ENCODE measurements at regions of chr11 and their contacts with region 1.

Region 1: DNA sequence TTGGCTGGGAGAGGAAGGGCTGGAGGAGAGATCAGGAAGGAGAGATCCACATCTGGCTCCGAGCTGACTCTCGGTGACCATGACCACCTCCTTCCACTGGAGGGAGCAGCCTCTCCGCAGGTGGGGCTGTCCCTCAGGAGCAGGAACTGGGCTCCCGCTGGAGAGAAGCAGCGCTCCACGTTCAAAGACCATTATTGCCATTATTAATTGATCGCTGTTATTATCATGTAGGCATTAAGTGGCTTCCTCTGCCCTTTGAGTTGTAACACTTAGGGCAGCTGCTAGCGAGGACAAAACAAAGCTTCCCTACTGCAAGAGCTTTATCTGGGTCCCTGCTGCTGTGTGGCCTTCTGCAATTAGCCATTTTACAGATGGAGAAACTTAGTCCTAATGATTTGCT is 251.9 kb downstream of the ST3GAL4 start:
- DNase-seq: no peak
- H3K4me3 ChIP-seq: no peak overlapping the region
- H3K27ac ChIP-seq: no peak overlapping the region
- H3K4me1 ChIP-seq: peaks cover 0 to 7% (median 2%) of the 10 kb centered on the region in 6 donors
- H3K27me3 ChIP-seq: peaks cover 0 to 59% (median 0%) of the 10 kb centered on the region in 7 donors
- CTCF ChIP-seq: peak in 9 of 11 experiments; percentile 39 to 60 (median 50)
- POLR2A ChIP-seq: no peak

Region 2: DNA sequence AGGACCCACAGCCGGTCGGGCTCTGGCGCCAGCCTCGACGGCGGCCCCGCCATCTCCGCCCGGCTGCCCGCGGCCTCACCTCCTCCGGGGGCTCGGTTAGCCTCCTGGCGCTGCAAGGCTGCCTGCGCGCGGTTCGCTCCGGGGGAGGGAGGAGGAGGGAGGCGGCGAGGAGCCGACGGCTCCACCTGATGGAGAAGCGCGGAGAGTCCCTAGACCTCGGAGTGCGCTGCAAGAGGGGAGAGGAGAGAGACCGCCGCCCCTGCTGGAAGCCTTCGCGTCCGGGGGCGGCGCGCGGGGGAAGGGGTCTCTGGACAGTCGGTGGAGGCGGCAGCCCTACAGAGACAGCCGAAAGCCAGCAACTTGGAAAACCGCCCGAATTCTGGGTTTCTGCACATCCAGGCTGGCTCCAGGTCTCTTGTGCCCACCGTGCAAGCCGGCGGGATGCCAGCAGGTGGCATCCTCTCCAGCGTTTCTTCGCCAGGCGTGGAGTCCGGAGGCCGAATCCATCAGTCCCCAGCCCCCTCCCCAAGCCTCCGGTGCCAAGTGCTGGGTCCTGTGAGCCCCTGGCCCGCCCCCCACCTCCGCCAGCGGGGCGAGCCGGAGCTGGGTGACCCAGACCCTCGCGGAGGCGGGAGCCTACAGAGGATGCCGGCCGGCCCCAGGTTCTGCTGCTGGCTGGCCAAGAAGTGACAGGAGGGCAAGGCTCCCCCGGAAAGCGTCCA is 396.0 kb after region 1 on chr11:
- intact Hi-C with region 1: loop called (anchors 10 kb)
- DNase-seq: no peak
- H3K4me3 ChIP-seq: peak overlapping the region in 2 of 8 donors; percentile 9 to 27
- H3K27ac ChIP-seq: no peak overlapping the region
- H3K4me1 ChIP-seq: peaks cover 0 to 24% (median 12%) of the 10 kb centered on the region in 6 donors
- H3K27me3 ChIP-seq: peaks cover 0 to 94% (median 63%) of the 10 kb centered on the region in 7 donors
- CTCF ChIP-seq: peak in 5 of 11 experiments; percentile 13 to 36 (median 24)
- POLR2A ChIP-seq: no peak